ENCODE measurements at regions of chr17 and their contacts with region 1.

Region 1: GRCh38 chr17:20825539-20825938 is 217.3 kb downstream of the USP22 start:
- DNase-seq: no peak
- H3K4me3 ChIP-seq: no peak overlapping the region
- H3K27ac ChIP-seq: no peak overlapping the region
- H3K4me1 ChIP-seq: no peaks in the 10 kb centered on the region
- H3K27me3 ChIP-seq: no peaks in the 10 kb centered on the region
- CTCF ChIP-seq: no peak

Region 2: DNA sequence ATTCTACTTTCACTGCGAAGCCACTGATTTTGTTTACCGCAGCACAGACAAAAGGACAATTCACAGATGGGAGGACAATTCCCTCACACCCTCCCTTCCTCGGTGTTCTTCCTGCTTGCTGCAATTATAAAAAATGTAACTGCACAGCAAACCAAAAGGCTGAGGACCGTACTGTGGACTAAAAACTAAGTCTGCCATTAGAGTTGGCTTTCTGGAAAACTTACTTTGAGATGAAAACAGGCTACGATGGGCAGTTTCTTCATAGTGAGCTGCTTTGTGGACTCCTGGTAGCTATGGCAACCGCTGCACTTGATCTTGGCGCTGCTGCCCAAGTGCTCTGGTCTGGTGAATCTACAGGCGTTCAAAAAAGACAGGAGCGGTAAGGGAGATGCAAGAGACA is 182.1 kb after region 1 on chr17:
- CTCF ChIA-PET with region 1: no interaction called
- dilution Hi-C with region 1: loop called (anchors 5 kb)
- in situ Hi-C with region 1: no loop called
- intact Hi-C with region 1: no loop called
- DNase-seq: no peak
- H3K4me3 ChIP-seq: no peak overlapping the region
- H3K27ac ChIP-seq: no peak overlapping the region
- H3K4me1 ChIP-seq: no peaks in the 10 kb centered on the region
- H3K27me3 ChIP-seq: no peaks in the 10 kb centered on the region
- CTCF ChIP-seq: no peak

Region 3: GRCh38 chr17:21019976-21020586 is 194.5 kb after region 1 on chr17:
- CTCF ChIA-PET with region 1: no interaction called
- dilution Hi-C with region 1: no loop called
- in situ Hi-C with region 1: no loop called
- intact Hi-C with region 1: no loop called
- DNase-seq: no peak
- H3K4me3 ChIP-seq: no peak overlapping the region
- H3K27ac ChIP-seq: no peak overlapping the region
- H3K4me1 ChIP-seq: no peaks in the 10 kb centered on the region
- H3K27me3 ChIP-seq: no peaks in the 10 kb centered on the region
- CTCF ChIP-seq: peak; percentile 10 to 32

Measured in mammary epithelial cell (primary cell).